Activated CD4-positive, alpha-beta T cell treated with anti-CD3 and anti-CD28 coated beads for 36 hours (primary cell): ENCODE measurements at regions of chr13 and their contacts with region 1.

Region 1: DNA sequence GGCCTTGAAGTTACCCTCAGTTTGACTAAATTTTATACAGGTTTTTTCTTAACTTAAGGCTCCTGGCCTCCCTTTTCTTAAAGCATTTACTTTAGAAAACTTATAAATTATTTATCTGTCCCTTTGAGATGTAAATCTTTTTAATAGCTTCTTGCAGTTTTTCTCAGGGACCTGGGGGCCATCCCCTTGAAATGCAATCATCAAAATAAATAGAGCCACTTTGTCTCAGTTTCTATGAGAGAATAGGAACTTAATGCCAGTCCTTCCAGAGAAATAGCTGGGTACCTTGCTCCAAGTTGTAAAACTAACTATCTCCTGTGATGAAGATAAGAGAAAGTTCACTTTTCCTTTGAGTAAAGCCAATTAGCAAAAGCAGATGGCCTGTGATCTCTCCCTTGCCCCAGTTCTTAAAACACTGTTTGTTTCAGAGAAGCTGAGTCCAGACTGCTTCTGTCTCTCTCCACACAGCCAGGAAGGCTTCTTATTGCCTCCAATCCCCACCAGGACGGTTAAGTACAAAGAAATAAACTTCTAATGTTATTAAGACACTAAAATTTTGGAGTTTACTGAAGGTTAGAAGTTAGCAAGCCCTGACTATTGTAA is 913.1 kb downstream of the OLFM4 start:
- DNase-seq: no peak
- ATAC-seq: no peak
- H3K4me3 Mint-ChIP-seq: no peak overlapping the region
- H3K27ac Mint-ChIP-seq: no peak overlapping the region
- H3K4me1 Mint-ChIP-seq: no peaks in the 10 kb centered on the region
- H3K27me3 Mint-ChIP-seq: no peaks in the 10 kb centered on the region

Region 2: GRCh38 chr13:53901593-53901992 is 40.1 kb before region 1 on chr13:
- CTCF ChIA-PET with region 1: no interaction called
- POLR2A ChIA-PET with region 1: no interaction called
- intact Hi-C with region 1: no loop called
- DNase-seq: no peak
- ATAC-seq: no peak
- H3K4me3 Mint-ChIP-seq: no peak overlapping the region
- H3K27ac Mint-ChIP-seq: no peak overlapping the region
- H3K4me1 Mint-ChIP-seq: no peaks in the 10 kb centered on the region
- H3K27me3 Mint-ChIP-seq: no peaks in the 10 kb centered on the region

Region 3: DNA sequence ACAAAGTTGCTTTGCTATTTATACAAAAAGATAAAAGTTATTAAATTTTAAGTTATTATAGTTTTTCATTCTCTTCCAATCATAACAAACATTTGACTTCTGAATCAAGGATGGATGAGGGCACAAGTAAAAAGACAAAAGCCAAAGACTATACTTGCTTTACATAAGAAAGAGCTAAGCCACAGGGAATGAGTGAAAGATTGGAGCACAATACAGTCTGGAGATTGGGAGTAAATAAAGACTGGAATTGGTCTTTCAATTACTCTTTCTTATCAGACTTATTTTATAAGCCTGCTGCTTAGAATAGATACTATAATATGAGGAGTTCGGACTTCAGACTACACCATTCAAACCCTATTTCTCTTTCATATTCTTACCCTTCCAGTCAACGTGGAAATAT is 1325.0 kb after region 1 on chr13:
- CTCF ChIA-PET with region 1: no interaction called
- POLR2A ChIA-PET with region 1: no interaction called
- intact Hi-C with region 1: loop called in 1 of 2 experiments (anchors 5 kb)
- DNase-seq: no peak
- ATAC-seq: no peak
- H3K4me3 Mint-ChIP-seq: no peak overlapping the region
- H3K27ac Mint-ChIP-seq: no peak overlapping the region
- H3K4me1 Mint-ChIP-seq: no peaks in the 10 kb centered on the region
- H3K27me3 Mint-ChIP-seq: no peaks in the 10 kb centered on the region